ENCODE measurements at regions of chr11 and their contacts with region 1.

Region 1: DNA sequence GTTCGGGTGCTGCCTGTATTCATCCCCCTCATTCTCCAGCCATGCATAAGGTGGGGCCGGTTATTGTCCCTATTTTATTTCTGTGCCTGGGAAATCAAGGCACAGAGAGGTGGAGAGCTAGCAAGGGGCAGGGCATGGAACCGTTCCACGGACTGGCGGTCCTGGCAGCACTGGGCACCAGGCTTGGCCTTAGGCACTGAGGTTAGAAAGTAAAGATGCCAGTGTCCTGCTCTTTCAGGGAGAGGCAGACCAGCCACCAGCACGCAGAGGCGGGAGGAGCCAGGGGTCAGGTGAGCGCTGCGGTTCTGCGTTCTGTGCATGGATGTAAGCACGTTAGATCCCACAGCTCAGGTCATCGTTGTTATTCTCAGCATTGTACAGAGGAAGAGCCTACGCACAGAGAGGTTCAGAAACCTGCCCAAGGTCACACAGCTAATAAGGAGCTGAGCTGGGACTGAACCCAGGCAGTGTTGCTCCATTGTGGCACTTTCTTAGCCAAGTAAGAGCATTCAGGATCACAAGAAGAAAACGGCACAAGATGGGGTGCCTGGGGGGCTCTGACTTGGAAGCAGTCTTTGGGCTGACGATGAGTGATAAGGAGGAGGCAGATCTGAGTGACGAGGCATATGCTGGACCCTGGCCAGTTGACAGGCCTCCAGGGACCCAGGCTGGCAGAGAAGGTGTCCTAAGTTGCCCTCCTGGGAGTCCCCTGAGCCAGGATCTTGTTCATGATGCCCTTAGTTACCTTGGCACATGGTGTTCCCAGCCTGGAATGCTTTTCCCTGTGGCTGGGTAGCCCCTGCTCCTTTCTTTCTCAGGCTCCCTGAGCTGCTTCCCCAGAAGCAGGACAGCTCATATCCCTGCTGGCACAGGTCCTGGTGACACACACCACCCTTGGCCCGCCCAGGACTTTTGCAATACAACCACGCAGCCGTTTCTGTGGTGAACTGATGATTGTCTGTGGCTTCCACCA is 41.1 kb downstream of the OSBPL5 start:
- DNase-seq: peak; percentile 99
- H3K4me3 Mint-ChIP-seq: peak overlapping the region; percentile 90
- H3K27ac Mint-ChIP-seq: peak overlapping the region; percentile 79
- H3K4me1 Mint-ChIP-seq: peaks cover 32% of the 10 kb centered on the region
- H3K27me3 Mint-ChIP-seq: no peaks in the 10 kb centered on the region
- CTCF ChIP-seq: no peak

Region 2: GRCh38 chr11:3164979-3165814 is 41.1 kb after region 1 on chr11 and contains the start of gene OSBPL5:
- CTCF ChIA-PET with region 1: interaction called, 3 read pairs
- POLR2A ChIA-PET with region 1: interaction called, 11 read pairs
- intact Hi-C with region 1: loop called (anchors 5 kb)
- DNase-seq: peak; percentile 65
- H3K4me3 Mint-ChIP-seq: peak within 1 kb of the TSS; percentile 75
- H3K27ac Mint-ChIP-seq: peak within 1 kb of the TSS; percentile 6
- H3K4me1 Mint-ChIP-seq: peaks cover 20% of the 10 kb centered on the region
- H3K27me3 Mint-ChIP-seq: no peaks in the 10 kb centered on the region
- CTCF ChIP-seq: no peak
- total RNA-seq, gene OSBPL5: 85.7 and 115 TPM in 2 replicates

Region 3: DNA sequence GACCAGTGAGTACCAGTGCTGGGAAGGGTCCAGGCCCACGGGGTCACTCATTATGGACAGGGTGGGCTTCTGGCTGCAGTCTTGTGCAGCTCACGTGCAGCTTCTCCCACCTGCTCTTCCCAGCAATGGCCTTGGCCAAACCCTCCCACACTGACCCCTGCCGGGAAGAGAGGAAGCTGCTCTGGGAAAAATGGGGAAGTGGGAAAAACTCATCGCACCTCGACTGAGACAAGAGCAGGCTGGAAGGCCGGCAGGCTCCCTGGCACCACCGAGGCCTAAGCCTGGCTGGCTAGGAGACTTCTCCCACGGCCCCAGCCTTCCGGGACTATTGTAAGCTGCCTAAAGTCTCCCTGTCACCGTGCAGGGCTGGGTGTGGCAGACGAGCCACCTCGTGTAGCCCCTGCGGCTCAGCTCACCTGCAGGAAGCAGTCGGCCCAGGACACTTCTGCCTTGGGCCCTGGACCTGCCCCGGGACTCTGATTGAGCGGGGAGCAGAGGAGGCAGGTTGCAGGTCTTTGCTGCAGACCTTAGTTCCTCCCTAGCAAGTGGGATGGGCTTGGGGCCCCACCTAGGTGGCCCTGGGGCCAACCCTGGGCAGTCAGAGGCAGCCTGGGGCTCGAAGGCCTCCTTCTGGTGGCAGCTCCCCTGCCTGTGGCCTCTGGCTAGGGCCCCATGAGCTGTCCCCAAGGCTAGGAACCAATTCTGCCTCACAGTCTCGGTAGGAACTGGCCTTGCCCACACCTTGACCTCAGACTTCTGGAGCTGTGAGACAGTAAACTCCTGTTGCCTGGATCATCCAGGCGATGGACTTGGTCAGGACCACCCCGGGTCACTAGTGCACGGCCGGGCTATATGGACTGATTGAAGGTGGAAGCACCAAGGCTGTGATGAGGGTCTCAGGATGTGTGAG is 71.5 kb after region 1 on chr11:
- CTCF ChIA-PET with region 1: interaction called, 3 read pairs
- POLR2A ChIA-PET with region 1: no interaction called
- intact Hi-C with region 1: loop called (anchors 1 kb)
- DNase-seq: peak; percentile 52
- H3K4me3 Mint-ChIP-seq: no peak overlapping the region
- H3K27ac Mint-ChIP-seq: no peak overlapping the region
- H3K4me1 Mint-ChIP-seq: no peaks in the 10 kb centered on the region
- H3K27me3 Mint-ChIP-seq: peaks cover 11% of the 10 kb centered on the region
- CTCF ChIP-seq: peak; percentile 42

Region 4: GRCh38 chr11:3368199-3368598 is 244.2 kb after region 1 on chr11:
- CTCF ChIA-PET with region 1: no interaction called
- POLR2A ChIA-PET with region 1: no interaction called
- intact Hi-C with region 1: no loop called
- DNase-seq: no peak
- H3K4me3 Mint-ChIP-seq: no peak overlapping the region
- H3K27ac Mint-ChIP-seq: no peak overlapping the region
- H3K4me1 Mint-ChIP-seq: no peaks in the 10 kb centered on the region
- H3K27me3 Mint-ChIP-seq: no peaks in the 10 kb centered on the region
- CTCF ChIP-seq: no peak

Measured in MCF 10A (cell line).